Activated CD8-positive, alpha-beta T cell treated with anti-CD3 and anti-CD28 coated beads, Interleukin-2, amount 10 ng/mL, durations not matched to agents 7 days and 5 days (primary cell): ENCODE measurements at regions of chr4 and their contacts with region 1.

Region 1: DNA sequence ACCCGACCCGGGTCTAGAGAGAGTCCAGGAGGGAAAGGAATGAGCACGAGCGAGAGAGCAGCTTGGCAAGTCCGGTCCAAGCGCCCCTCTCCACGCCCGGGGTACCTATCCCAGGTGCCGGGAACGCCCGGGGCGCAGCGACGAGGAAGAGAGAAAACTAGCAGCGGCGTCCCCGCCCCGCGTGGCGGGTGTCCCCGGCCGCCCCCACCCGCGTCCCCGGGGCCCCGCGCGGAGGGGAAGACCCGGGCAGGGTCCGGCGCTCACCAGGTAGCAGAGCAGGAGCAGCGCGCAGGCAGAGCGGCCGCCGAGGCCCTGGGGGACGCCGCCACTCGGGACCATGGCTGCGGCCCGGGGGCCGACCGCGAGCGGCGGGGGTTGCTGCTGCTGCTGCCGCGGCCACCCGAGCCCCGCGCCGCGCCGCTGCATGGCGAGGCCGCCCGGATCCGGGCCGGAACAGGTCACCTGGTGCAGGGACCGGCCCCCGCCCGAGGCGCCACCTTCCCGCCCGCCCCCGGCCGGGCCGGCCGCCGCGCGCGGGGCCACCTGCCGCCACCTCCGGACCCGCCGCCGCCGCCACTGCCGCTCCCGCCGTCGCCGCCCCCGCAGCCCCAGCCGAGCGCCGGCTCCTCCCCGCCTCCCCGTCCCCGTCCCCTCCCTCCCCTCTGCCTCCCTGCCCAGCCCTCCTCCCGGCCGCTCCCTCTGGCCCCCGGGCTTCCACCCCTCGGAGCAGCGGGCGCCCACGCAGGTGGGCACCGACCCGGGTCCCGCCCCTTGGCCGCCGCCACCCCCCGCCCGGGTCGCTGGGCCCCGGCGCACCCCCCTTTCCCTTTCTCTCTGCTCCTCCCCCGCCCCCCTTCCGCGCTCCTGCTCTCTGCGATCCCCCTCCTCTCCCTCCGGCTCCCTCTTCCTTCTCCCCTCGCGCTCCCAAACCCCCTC is at the start of gene SEL1L3:
- DNase-seq: peak; percentile 53
- ATAC-seq: peak; percentile 64
- H3K4me3 Mint-ChIP-seq: peak within 1 kb of the TSS; percentile 100
- H3K27ac Mint-ChIP-seq: peak within 1 kb of the TSS; percentile 98
- H3K4me1 Mint-ChIP-seq: peaks cover 45% of the 10 kb centered on the region
- H3K27me3 Mint-ChIP-seq: no peaks in the 10 kb centered on the region
- total RNA-seq, gene SEL1L3: 62.3 to 65.5 TPM

Region 2: GRCh38 chr4:25913851-25914669 is 51.4 kb after region 1 on chr4 and contains the start of gene SMIM20:
- CTCF ChIA-PET with region 1: interaction called, 10 read pairs
- POLR2A ChIA-PET with region 1: interaction called, 17 read pairs
- DNase-seq: peak; percentile 92
- ATAC-seq: peak; percentile 96
- H3K4me3 Mint-ChIP-seq: peak within 1 kb of the TSS; percentile 81
- H3K27ac Mint-ChIP-seq: peak within 1 kb of the TSS; percentile 96
- H3K4me1 Mint-ChIP-seq: peaks cover 18% of the 10 kb centered on the region
- H3K27me3 Mint-ChIP-seq: no peaks in the 10 kb centered on the region
- total RNA-seq, gene SMIM20: 11.1 to 13.9 TPM